Activated CD4-positive, alpha-beta T cell treated with anti-CD3 and anti-CD28 coated beads for 36 hours (primary cell): ENCODE measurements at regions of chr17 and their contacts with region 1.

Region 1: DNA sequence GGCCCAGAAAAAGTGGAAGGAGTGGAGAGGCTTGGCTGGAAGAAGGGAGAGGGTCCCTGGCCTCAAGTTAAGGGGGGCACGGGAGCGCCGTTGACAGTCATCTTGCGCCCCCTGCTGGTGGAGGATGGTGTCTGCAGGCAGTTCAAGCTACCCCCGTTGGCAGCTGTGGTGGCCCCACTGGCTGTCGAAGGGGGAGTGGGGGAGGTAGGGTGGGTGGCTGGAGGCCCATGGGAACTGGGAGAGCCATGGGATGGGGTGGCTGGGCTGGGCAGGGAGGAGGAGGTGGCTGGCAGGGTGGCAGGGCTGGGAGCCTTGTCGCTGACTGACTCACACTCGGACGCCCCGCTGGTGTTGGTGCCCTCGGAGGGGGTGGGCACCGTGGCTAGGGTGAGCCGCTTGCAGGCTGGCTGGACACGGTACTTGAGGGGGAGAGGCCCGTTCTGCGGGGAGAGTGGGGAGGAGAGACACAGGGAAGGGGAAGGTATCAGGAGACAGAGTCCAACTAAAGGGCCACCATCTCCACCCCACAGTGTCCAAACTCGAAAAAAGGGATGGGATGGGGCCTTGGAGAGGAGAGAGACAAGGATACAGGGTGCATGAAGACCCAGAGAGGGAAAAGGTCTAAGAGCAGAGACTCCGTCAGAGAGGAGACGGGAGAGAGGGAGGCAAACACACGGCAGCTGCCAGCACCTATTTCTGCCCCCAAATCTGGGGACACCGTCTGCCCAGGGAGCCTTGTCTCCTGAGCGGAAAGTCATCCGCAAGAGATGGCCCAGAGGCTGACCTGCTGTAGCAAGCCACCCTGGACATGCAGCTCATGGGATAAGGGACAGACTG is 5.2 kb downstream of the CISD3 start:
- DNase-seq: peak; percentile 85
- ATAC-seq: peak; percentile 21
- H3K4me3 Mint-ChIP-seq: no peak overlapping the region
- H3K27ac Mint-ChIP-seq: no peak overlapping the region
- H3K4me1 Mint-ChIP-seq: peaks cover 45% of the 10 kb centered on the region
- H3K27me3 Mint-ChIP-seq: no peaks in the 10 kb centered on the region

Region 2: DNA sequence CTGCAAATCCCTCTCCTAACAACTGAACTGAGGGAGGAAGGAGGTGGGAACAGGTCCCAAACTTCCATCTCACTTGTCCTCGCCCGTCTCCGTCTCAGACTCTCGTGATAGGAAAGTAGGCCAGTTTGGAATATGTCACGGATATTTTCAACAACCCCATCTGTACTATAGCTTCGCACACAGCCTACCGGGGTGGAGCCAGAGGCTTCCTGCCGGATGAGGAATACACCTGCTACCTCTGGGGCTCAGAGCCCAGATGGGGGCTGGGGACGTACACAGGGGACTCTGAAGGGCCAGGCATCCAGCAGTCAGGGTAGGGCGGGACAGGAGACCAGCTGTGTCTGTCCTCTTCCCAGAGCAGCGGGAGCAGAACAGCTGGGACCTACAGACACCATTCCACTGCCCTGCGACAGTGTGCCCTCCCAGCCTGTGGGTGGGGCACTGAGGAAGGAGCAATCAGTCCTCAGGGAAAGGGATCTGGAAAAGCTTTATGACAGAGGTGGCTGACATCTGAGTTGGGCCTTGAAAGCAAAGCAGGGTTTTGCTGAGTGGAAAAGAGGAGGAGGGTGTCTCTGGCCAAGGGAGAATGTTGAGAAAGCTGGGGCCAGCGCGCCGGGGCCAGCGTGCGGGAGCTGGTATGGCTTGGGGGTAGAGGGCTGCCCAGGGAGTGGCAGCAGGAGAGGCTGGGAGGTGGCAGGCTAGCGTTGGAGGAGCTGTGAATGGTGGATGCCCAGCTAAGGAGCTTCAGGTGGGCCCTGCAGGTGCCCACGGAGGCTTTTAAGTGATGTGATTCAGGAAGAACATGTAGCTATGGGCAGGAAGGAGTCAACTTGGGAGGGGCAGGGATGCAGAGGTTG is 118.1 kb before region 1 on chr17:
- CTCF ChIA-PET with region 1: no interaction called
- POLR2A ChIA-PET with region 1: no interaction called
- intact Hi-C with region 1: no loop called
- DNase-seq: no peak
- ATAC-seq: no peak
- H3K4me3 Mint-ChIP-seq: no peak overlapping the region
- H3K27ac Mint-ChIP-seq: no peak overlapping the region
- H3K4me1 Mint-ChIP-seq: no peaks in the 10 kb centered on the region
- H3K27me3 Mint-ChIP-seq: peaks cover 16% of the 10 kb centered on the region

Region 3: DNA sequence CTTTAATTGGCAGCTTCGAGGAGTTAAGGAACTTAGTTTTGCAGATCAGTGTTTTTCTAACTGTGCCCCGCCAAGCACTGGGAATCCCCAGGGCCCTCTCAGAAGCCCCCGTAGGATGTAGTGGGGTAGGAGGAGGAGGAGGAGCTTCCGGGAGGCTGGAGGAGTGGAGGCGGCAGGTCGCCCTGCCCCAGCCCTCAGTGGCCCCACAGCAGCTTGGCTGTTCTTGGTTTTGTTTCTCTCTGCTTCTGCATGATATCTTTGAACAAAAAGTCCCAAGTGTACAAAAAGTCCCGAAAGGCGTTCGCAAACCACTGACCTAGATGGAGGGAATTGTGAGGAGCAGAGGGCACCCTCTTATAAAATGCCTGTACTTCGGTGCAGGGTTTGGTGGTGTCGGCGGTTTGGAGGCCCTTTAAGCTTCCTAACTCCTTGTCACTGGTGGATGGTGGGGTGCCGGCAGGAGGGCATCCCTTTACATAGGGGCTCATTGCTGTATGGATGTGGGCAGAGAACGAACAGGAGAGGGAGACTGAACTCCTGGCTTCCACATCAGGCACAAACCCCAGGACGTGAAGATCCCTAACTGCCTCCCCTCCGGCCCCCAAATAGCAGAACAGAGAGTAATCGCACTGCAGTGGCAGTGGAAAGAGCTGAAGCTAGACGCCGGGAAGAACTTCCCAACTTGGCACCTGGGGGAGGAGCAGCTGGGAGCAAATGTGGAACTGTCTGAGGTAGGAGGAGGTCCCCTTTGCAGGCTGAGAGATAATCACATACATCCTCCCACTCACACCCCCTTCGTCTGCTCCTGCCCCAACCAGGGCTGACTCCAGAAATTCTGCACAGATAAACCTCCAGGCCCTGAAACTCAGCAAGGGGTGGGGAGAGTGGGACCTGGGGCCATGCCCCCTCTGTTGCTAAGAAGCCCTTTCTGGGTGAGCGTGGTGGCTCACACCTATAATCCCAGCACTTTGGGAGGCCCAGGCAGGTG is 80.7 kb before region 1 on chr17:
- CTCF ChIA-PET with region 1: no interaction called
- POLR2A ChIA-PET with region 1: no interaction called
- intact Hi-C with region 1: no loop called
- DNase-seq: no peak
- ATAC-seq: peak; percentile 51
- H3K4me3 Mint-ChIP-seq: no peak overlapping the region
- H3K27ac Mint-ChIP-seq: no peak overlapping the region
- H3K4me1 Mint-ChIP-seq: peaks cover 13% of the 10 kb centered on the region
- H3K27me3 Mint-ChIP-seq: peaks cover 17% of the 10 kb centered on the region

Region 4: GRCh38 chr17:38719289-38719942 is 16.0 kb before region 1 on chr17:
- CTCF ChIA-PET with region 1: interaction called, 20 read pairs
- POLR2A ChIA-PET with region 1: interaction called, 6 read pairs
- intact Hi-C with region 1: no loop called
- DNase-seq: no peak
- ATAC-seq: no peak
- H3K4me3 Mint-ChIP-seq: no peak overlapping the region
- H3K27ac Mint-ChIP-seq: peak overlapping the region; percentile 73
- H3K4me1 Mint-ChIP-seq: peaks cover 45% of the 10 kb centered on the region
- H3K27me3 Mint-ChIP-seq: no peaks in the 10 kb centered on the region